Right cardiac atrium (tissue), 5 donors: ENCODE measurements at regions of chr1 and their contacts with region 1.

Region 1: DNA sequence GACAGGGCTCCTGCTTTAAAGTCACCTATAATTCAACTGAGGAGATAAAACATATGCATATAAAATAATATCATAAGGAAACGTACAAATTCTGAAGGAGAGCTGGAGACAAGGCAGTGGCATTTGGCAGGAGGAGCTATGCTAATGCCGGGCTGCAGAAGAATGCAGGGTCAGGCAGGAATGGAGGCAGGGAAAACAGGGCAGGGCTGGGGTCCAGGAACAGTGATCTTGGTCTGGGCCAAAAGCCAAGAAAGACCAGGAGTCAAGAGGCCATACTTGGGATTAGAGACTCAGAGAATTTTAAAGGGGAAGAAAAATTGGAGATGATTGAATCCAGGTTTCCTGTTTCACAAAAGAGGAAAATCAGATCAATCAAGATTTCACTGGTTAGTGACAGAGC is 20.0 kb upstream of the BRDT start:
- DNase-seq: no peak
- ATAC-seq: peak; percentile 42 to 54
- H3K4me3 ChIP-seq: no peak overlapping the region
- H3K27ac ChIP-seq: no peak overlapping the region
- H3K4me1 ChIP-seq: no peaks in the 10 kb centered on the region
- H3K27me3 ChIP-seq: no peaks in the 10 kb centered on the region

Region 2: GRCh38 chr1:91511386-91511785 is 417.9 kb before region 1 on chr1:
- intact Hi-C with region 1: loop called (anchors 2 to 5 kb)
- DNase-seq: no peak
- ATAC-seq: no peak
- H3K4me3 ChIP-seq: no peak overlapping the region
- H3K27ac ChIP-seq: no peak overlapping the region
- H3K4me1 ChIP-seq: no peaks in the 10 kb centered on the region
- H3K27me3 ChIP-seq: no peaks in the 10 kb centered on the region

Region 3: DNA sequence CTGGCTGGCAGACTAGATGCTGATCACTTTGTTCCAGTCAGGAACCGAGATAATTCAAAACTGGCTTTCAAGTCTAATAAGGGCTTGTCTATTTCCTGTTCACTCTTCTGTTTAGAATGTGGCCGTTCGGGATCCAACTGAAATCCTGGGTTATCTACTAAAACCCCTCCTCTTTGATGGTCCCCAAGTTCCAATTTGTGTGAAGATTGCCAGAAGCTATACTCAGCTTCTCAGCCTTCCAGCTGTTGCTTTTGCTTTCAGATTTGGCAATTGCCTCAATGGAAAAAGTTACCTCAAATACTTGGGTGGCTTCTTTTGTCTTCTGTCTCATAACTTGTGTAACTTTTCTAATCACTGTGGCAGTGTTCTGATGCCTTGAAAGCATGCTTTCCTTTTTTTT is 194.6 kb after region 1 on chr1:
- intact Hi-C with region 1: no loop called
- DNase-seq: no peak
- ATAC-seq: peak; percentile 59 to 94
- H3K4me3 ChIP-seq: no peak overlapping the region
- H3K27ac ChIP-seq: no peak overlapping the region
- H3K4me1 ChIP-seq: no peaks in the 10 kb centered on the region
- H3K27me3 ChIP-seq: no peaks in the 10 kb centered on the region